CD4-positive, alpha-beta T cell (primary cell): ENCODE measurements at regions of chr9 and their contacts with region 1.

Region 1: GRCh38 chr9:36166101-36166927 is 2.9 kb upstream of the CCIN start:
- DNase-seq: peak; percentile 57 to 91 (median 78)
- ATAC-seq: peak; percentile 98
- H3K4me3 ChIP-seq: peak overlapping the region; percentile 62
- H3K4me3 Mint-ChIP-seq: peak overlapping the region; percentile 51
- H3K27ac ChIP-seq: no peak overlapping the region
- H3K27ac Mint-ChIP-seq: no peak overlapping the region
- H3K4me1 ChIP-seq: peaks cover 15% of the 10 kb centered on the region
- H3K4me1 Mint-ChIP-seq: no peaks in the 10 kb centered on the region
- H3K27me3 ChIP-seq: no peaks in the 10 kb centered on the region
- H3K27me3 Mint-ChIP-seq: no peaks in the 10 kb centered on the region
- CTCF ChIP-seq: peak; percentile 93

Region 2: DNA sequence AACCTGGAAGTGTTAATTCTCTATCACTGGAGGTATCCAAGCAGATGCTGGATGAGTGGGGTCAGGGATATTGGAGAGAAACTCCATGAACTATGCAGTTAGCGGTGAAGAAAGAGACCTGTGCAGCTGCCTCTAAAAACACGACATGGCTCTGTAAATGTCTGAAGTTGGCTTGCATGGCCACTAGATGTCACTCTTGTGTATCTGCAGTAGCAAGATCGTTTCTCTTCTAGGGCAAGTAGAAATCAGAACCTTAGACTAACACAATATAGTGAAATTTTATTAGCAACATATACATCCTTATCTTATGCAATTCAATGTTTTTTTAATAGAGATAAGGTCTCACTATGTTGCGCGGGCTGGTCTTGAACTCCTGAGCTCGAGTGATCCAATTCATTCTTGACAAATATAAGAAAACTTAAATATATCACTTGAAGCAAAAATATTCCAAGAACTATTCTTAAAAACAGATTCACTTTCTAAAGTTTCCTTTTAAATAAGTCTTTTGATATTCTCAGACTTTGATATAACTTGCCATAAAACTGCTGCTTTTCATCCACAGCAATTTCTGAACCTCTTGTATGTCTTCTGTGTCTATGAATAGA is 211.3 kb before region 1 on chr9:
- CTCF ChIA-PET with region 1: no interaction called
- POLR2A ChIA-PET with region 1: no interaction called
- intact Hi-C with region 1: loop called in 1 of 2 experiments (anchors 10 kb)
- DNase-seq: peak in 13 of 14 experiments; percentile 14 to 83 (median 33)
- ATAC-seq: peak; percentile 81
- H3K4me3 ChIP-seq: no peak overlapping the region
- H3K4me3 Mint-ChIP-seq: no peak overlapping the region
- H3K27ac ChIP-seq: no peak overlapping the region
- H3K27ac Mint-ChIP-seq: no peak overlapping the region
- H3K4me1 ChIP-seq: no peaks in the 10 kb centered on the region
- H3K4me1 Mint-ChIP-seq: peaks cover 6% of the 10 kb centered on the region
- H3K27me3 ChIP-seq: peaks cover 0 to 2% of the 10 kb centered on the region in 2 experiments
- H3K27me3 Mint-ChIP-seq: peaks cover 5% of the 10 kb centered on the region
- CTCF ChIP-seq: peak; percentile 87

Region 3: GRCh38 chr9:36023260-36024048 is 142.9 kb before region 1 on chr9:
- CTCF ChIA-PET with region 1: no interaction called
- POLR2A ChIA-PET with region 1: no interaction called
- intact Hi-C with region 1: no loop called
- DNase-seq: peak; percentile 51 to 84 (median 62)
- ATAC-seq: peak; percentile 87
- H3K4me3 ChIP-seq: no peak overlapping the region
- H3K4me3 Mint-ChIP-seq: no peak overlapping the region
- H3K27ac ChIP-seq: no peak overlapping the region
- H3K27ac Mint-ChIP-seq: no peak overlapping the region
- H3K4me1 ChIP-seq: peaks cover 4% of the 10 kb centered on the region
- H3K4me1 Mint-ChIP-seq: no peaks in the 10 kb centered on the region
- H3K27me3 ChIP-seq: peaks cover 0 to 2% of the 10 kb centered on the region in 2 experiments
- H3K27me3 Mint-ChIP-seq: peaks cover 4% of the 10 kb centered on the region
- CTCF ChIP-seq: peak; percentile 82

Region 4: DNA sequence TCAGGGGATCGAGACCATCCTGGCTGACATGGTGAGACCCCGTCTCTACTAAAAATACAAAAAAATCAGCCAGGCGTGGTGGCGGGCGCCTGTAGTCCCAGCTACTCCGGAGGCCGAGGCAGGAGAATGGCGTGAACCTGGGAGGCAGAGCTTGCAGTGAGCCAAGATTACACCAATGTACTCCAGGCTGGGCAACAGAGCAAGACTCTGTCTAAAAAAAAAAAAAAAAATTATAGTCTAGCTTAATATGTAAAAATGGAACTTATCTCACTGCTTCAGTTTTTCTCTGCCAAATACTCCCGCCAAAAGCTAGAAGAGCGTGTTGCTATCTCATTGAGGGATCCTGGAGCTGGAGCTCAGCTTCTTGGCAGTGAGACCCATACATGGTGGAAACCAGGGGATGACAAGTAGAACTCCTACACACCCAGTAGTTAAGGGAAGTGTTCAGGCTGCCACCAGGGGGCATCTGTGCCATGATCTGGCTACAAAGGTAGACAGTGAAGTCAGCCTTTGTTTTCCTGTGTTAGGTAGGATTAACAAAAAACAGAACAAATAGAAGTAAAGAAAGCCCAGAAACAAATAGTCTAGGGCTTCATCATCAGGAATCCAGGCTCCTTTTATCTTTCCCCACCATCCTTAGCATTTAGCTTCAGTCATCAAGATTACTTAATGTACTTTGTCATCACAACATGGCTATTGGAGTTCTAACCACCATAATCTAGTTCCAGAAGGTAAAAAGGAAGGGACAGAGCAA is 63.4 kb before region 1 on chr9:
- CTCF ChIA-PET with region 1: interaction called, 122 read pairs
- POLR2A ChIA-PET with region 1: interaction called, 10 read pairs
- intact Hi-C with region 1: loop called (anchors 1 kb)
- DNase-seq: peak; percentile 79 to 95 (median 86)
- ATAC-seq: peak; percentile 100
- H3K4me3 ChIP-seq: no peak overlapping the region
- H3K4me3 Mint-ChIP-seq: no peak overlapping the region
- H3K27ac ChIP-seq: no peak overlapping the region
- H3K27ac Mint-ChIP-seq: no peak overlapping the region
- H3K4me1 ChIP-seq: peaks cover 8% of the 10 kb centered on the region
- H3K4me1 Mint-ChIP-seq: peaks cover 10% of the 10 kb centered on the region
- H3K27me3 ChIP-seq: no peaks in the 10 kb centered on the region
- H3K27me3 Mint-ChIP-seq: no peaks in the 10 kb centered on the region
- CTCF ChIP-seq: peak; percentile 80

Region 5: DNA sequence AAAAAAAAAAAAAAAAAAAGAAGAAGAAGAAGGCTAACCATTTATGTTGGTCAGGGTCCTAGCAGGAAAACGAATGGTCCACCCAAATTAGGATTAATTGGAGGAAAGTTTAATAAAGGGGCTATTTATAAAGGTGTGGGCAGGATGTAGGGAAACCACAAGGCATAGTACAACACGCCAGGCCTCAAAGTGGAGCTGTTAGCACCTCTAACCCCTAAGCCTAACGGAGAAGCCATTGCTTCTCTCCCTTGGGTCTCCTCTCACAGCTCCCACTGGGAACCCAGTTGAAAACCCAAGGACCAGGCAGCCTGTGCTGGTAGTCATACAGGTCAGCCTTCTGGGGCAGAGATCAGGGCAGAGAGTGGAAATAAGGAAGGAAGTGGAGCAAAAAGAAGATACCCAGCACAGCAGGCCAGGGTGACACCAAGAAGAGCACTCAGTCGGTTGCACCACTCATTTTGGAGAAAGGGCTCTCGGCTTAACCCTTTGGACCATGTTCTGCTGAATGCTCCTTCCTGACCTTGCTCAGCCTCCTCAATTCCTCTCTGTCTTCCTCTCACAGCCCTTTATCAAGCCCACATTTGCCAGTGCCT is 38.6 kb before region 1 on chr9:
- CTCF ChIA-PET with region 1: interaction called, 7 read pairs
- POLR2A ChIA-PET with region 1: no interaction called
- intact Hi-C with region 1: loop called in 1 of 2 experiments (anchors 5 kb)
- DNase-seq: peak in 2 of 14 experiments; percentile 43 to 49
- ATAC-seq: peak; percentile 39
- H3K4me3 ChIP-seq: no peak overlapping the region
- H3K4me3 Mint-ChIP-seq: no peak overlapping the region
- H3K27ac ChIP-seq: no peak overlapping the region
- H3K27ac Mint-ChIP-seq: peak overlapping the region; percentile 66
- H3K4me1 ChIP-seq: peaks cover 30% of the 10 kb centered on the region
- H3K4me1 Mint-ChIP-seq: peaks cover 29% of the 10 kb centered on the region
- H3K27me3 ChIP-seq: no peaks in the 10 kb centered on the region
- H3K27me3 Mint-ChIP-seq: no peaks in the 10 kb centered on the region
- CTCF ChIP-seq: no peak

Region 6: GRCh38 chr9:36136272-36136893 is 29.9 kb before region 1 on chr9 and contains the start of gene GLIPR2:
- CTCF ChIA-PET with region 1: interaction called, 33 read pairs
- POLR2A ChIA-PET with region 1: interaction called, 5 read pairs
- intact Hi-C with region 1: no loop called
- DNase-seq: peak; percentile 53 to 91 (median 72)
- ATAC-seq: peak; percentile 93
- H3K4me3 ChIP-seq: peak within 1 kb of the TSS; percentile 85
- H3K4me3 Mint-ChIP-seq: peak within 1 kb of the TSS; percentile 98
- H3K27ac ChIP-seq: peak within 1 kb of the TSS; percentile 53 to 59
- H3K27ac Mint-ChIP-seq: peak within 1 kb of the TSS; percentile 92
- H3K4me1 ChIP-seq: peaks cover 53% of the 10 kb centered on the region
- H3K4me1 Mint-ChIP-seq: peaks cover 51% of the 10 kb centered on the region
- H3K27me3 ChIP-seq: no peaks in the 10 kb centered on the region
- H3K27me3 Mint-ChIP-seq: no peaks in the 10 kb centered on the region
- CTCF ChIP-seq: no peak
- total RNA-seq, gene GLIPR2: 13.6 to 13.7 TPM

Region 7: DNA sequence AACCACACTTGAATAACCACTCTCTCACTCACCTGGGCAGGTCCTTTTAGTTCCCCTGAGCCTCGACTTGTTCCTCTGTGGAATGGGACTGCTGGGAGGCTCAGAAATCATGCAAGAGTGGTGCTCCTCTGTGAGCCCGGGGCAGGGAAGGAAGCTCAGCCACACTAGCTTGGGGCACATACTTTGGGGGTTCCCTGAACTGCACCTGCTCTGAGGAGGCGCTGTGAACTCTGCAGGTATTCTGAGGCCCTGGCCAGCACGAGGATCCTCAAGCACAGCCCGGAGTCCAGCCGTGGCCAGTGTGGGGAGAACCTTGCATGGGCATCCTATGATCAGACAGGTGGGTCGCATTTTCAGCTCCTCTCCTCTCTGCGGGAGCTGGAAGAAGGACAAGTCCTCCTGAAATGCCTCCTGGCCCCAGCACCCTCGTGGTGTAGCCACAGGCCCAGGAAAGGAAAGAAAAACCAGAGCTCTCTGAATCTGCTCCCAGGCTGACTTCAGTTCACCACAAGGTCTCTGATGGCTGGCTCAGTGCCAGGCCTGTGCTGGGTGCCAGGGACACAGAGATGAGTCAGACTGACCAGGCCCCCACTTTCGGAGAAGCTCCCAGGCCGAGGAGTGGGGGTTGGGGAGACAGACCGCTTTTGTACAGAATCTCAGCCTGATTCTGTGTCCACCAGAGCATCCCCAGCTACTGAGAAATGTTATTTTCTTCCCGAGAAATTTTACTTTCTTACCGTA is 17.8 kb before region 1 on chr9:
- CTCF ChIA-PET with region 1: interaction called, 33 read pairs
- POLR2A ChIA-PET with region 1: interaction called, 4 read pairs
- intact Hi-C with region 1: no loop called
- DNase-seq: peak; percentile 36 to 88 (median 66)
- ATAC-seq: no peak
- H3K4me3 ChIP-seq: no peak overlapping the region
- H3K4me3 Mint-ChIP-seq: peak overlapping the region; percentile 31
- H3K27ac ChIP-seq: peak overlapping the region; percentile 52 to 58
- H3K27ac Mint-ChIP-seq: peak overlapping the region; percentile 98
- H3K4me1 ChIP-seq: peaks cover 99% of the 10 kb centered on the region
- H3K4me1 Mint-ChIP-seq: peaks cover 84% of the 10 kb centered on the region
- H3K27me3 ChIP-seq: no peaks in the 10 kb centered on the region
- H3K27me3 Mint-ChIP-seq: no peaks in the 10 kb centered on the region
- CTCF ChIP-seq: no peak